ENCODE measurements at regions of chr10 and their contacts with region 1.

Region 1: GRCh38 chr10:127906548-127907377 is at the start of gene PTPRE:
- DNase-seq: peak; percentile 56 to 86
- H3K4me3 ChIP-seq: peak within 1 kb of the TSS; percentile 54
- H3K4me3 Mint-ChIP-seq: peak within 1 kb of the TSS; percentile 30
- H3K27ac Mint-ChIP-seq: no peak within 1 kb of the TSS
- H3K4me1 ChIP-seq: peaks cover 23% of the 10 kb centered on the region
- H3K4me1 Mint-ChIP-seq: peaks cover 9% of the 10 kb centered on the region
- H3K27me3 ChIP-seq: no peaks in the 10 kb centered on the region
- H3K27me3 Mint-ChIP-seq: peaks cover 11% of the 10 kb centered on the region
- CTCF ChIP-seq: peak; percentile 39 to 89
- total RNA-seq, gene PTPRE: 0.46 and 0.50 TPM in 2 replicates

Region 2: GRCh38 chr10:127863231-127863825 is 43.4 kb before region 1 on chr10:
- CTCF ChIA-PET with region 1: no interaction called
- POLR2A ChIA-PET with region 1: no interaction called
- intact Hi-C with region 1: no loop called
- DNase-seq: no peak
- H3K4me3 ChIP-seq: no peak overlapping the region
- H3K4me3 Mint-ChIP-seq: no peak overlapping the region
- H3K27ac Mint-ChIP-seq: no peak overlapping the region
- H3K4me1 ChIP-seq: no peaks in the 10 kb centered on the region
- H3K4me1 Mint-ChIP-seq: peaks cover 7% of the 10 kb centered on the region
- H3K27me3 ChIP-seq: no peaks in the 10 kb centered on the region
- H3K27me3 Mint-ChIP-seq: peaks cover 4% of the 10 kb centered on the region
- CTCF ChIP-seq: no peak

Region 3: GRCh38 chr10:127973791-127974311 is 67.1 kb after region 1 on chr10:
- CTCF ChIA-PET with region 1: no interaction called
- POLR2A ChIA-PET with region 1: no interaction called
- intact Hi-C with region 1: loop called (anchors 1 kb)
- DNase-seq: peak in 1 of 2 experiments; percentile 23
- H3K4me3 ChIP-seq: no peak overlapping the region
- H3K4me3 Mint-ChIP-seq: no peak overlapping the region
- H3K27ac Mint-ChIP-seq: no peak overlapping the region
- H3K4me1 ChIP-seq: no peaks in the 10 kb centered on the region
- H3K4me1 Mint-ChIP-seq: no peaks in the 10 kb centered on the region
- H3K27me3 ChIP-seq: no peaks in the 10 kb centered on the region
- H3K27me3 Mint-ChIP-seq: peaks cover 13% of the 10 kb centered on the region
- CTCF ChIP-seq: peak in 1 of 2 experiments; percentile 63

Region 4: DNA sequence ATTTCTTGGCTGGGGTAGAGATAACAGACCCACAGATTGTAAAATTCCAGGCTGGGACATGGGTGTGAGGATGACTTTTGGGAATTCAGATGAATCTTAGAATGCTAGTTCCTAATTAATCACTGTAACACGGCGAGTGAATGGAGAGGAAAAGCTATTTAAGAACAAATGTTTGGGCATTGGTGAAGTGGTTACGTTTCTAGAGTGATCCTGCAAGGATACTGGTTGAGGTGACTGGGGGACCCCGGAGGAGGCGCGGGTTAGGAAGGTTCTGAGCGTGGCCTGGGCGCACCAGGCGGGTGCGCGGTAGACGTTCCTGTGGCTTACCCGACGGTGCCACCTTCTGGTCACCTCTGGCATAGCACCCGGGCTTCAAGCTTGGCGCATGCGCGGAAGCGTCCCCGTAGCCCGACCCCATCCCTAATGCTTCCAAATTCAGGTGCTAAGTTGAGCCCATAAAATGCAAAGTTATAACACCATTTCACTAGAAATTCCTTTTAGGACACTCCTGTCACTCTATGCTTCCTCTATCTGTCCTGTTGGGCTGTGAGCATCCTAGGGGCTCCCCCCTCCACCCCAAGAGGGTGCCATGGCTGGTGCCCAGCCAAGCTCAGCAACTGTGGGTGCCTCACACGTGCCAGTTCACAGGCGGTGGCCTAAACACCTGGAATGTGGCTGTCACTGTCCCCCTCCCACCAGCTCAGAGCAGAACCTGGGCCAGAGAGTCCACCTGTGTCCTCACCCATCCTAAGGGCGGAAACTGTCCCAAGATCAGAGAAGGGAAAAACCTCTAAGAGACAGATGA is 104.6 kb after region 1 on chr10:
- CTCF ChIA-PET with region 1: interaction called, 21 read pairs
- POLR2A ChIA-PET with region 1: no interaction called
- intact Hi-C with region 1: loop called (anchors 1 kb)
- DNase-seq: peak; percentile 71 to 90
- H3K4me3 ChIP-seq: no peak overlapping the region
- H3K4me3 Mint-ChIP-seq: no peak overlapping the region
- H3K27ac Mint-ChIP-seq: no peak overlapping the region
- H3K4me1 ChIP-seq: no peaks in the 10 kb centered on the region
- H3K4me1 Mint-ChIP-seq: no peaks in the 10 kb centered on the region
- H3K27me3 ChIP-seq: peaks cover 2% of the 10 kb centered on the region
- H3K27me3 Mint-ChIP-seq: no peaks in the 10 kb centered on the region
- CTCF ChIP-seq: peak; percentile 95 to 98

Region 5: DNA sequence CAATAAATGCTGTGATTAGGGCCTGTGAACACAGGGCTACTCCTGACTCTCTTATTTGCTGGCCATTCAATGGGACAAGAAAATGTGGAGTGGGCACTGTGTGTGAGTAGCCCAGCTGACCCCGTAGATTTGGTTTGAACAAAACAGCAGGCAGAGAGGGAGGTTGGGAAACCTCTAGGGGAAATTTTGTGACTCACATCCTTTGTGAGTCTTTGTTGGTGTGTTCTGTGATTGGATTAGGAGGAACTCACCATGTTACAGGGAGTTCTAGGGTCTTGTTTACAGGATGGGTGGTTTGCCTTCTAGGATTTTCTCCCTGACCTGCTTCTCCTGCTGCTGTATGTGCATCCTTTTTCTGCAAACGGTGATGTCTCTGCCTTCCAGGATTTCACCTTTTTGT is 347.7 kb after region 1 on chr10:
- CTCF ChIA-PET with region 1: no interaction called
- POLR2A ChIA-PET with region 1: no interaction called
- intact Hi-C with region 1: no loop called
- DNase-seq: no peak
- H3K4me3 ChIP-seq: no peak overlapping the region
- H3K4me3 Mint-ChIP-seq: no peak overlapping the region
- H3K27ac Mint-ChIP-seq: no peak overlapping the region
- H3K4me1 ChIP-seq: no peaks in the 10 kb centered on the region
- H3K4me1 Mint-ChIP-seq: no peaks in the 10 kb centered on the region
- H3K27me3 ChIP-seq: no peaks in the 10 kb centered on the region
- H3K27me3 Mint-ChIP-seq: peaks cover 11% of the 10 kb centered on the region
- CTCF ChIP-seq: no peak